ENCODE measurements at regions of chrX and their contacts with region 1.

Region 1: DNA sequence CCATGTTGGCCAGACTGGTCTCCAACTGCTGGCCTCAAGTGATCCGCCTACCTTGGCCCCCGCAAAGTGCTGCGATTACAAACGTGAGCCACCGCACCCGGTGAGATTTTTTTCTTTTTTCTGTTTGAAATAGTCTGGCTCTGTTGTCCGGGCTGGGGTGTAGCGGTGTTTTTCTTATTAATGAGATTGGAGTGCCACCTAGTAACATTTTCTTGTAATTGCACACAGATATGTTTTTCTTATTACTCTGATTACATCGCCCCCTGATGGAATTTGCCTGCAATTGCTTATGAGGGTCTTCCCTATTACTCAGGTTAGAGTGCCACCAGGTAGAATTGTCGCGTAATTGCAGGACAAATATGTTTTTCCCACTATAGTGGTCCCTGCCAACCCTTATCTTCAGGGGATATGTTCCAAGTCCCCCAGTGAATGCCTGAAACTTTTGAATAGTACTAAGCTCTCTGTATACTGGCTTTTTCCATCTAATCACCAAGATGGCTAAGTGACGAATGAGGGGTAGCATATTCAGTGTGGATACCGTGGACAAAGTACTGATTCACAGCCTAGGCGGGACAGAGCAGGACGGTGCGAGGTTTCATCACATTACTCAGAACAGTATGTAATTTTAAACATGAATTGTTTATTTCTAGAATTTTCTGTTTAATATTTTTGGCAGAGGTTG is 8.6 kb upstream of the PDHA1 start:
- DNase-seq: peak; percentile 33
- H3K4me3 Mint-ChIP-seq: no peak overlapping the region
- H3K27ac Mint-ChIP-seq: no peak overlapping the region
- H3K4me1 Mint-ChIP-seq: no peaks in the 10 kb centered on the region
- H3K27me3 Mint-ChIP-seq: no peaks in the 10 kb centered on the region
- CTCF ChIP-seq: peak; percentile 36

Region 2: DNA sequence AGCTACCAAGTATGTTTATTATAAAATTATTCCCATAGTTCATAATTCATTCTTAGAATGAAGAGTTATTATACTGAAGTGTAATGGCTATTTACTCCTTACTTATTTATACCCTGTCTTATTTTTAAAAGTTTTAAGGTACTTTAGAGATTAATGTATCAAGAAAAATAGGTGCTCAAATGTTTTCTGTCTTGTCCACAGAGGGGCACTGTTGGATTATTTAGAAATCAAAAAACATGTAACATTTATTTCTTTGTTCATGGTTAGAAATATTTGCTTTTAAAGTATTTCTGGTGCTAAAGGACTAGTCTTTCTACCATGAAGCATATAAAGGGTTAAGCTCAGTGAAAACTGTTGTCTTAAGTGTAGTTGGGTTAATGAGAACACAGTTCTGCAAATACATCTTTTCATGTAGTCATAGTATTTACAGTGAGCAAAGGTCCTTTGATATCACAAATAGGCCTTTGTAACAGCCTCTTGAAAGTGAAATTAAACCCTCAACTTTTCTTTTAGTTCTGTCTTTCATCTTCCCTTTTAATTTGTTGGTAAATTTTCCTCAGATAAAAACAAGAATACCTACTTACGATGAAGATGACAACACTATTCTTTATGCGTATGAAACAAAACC is 1590.1 kb before region 1 on chrX:
- CTCF ChIA-PET with region 1: no interaction called
- POLR2A ChIA-PET with region 1: no interaction called
- intact Hi-C with region 1: loop called (anchors 10 kb)
- DNase-seq: peak; percentile 14
- H3K4me3 Mint-ChIP-seq: no peak overlapping the region
- H3K27ac Mint-ChIP-seq: no peak overlapping the region
- H3K4me1 Mint-ChIP-seq: peaks cover 4% of the 10 kb centered on the region
- H3K27me3 Mint-ChIP-seq: peaks cover 40% of the 10 kb centered on the region
- CTCF ChIP-seq: peak; percentile 43

Region 3: DNA sequence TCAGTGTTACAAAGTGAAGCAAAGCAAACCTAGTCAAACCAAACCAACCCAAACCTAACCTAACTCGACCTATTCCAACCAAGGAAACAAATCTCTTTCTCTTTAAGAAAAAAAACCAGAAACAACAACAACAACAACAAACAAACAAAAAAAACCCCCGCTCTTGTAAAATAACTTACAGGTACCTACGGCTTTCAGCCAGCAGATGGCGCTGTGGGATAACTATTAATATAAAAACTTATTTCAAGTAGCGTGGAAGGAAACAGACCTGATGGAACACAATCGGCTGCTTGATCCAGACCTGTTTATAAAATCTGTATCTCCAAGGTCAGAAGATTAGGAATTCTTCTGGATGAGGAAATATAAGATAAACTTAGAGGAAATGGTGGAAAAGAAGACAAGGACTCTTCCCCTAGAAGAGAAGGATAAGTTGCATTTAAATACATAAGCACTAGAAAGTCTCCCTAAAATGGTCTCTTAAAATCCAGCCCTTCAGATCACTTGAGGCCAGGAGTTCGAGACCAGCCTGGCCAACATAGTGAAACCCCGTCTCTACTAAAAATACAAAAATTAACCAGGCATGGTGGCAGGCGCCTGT is 944.0 kb before region 1 on chrX:
- CTCF ChIA-PET with region 1: interaction called, 19 read pairs
- POLR2A ChIA-PET with region 1: no interaction called
- intact Hi-C with region 1: loop called (anchors 1 kb)
- DNase-seq: peak; percentile 52
- H3K4me3 Mint-ChIP-seq: no peak overlapping the region
- H3K27ac Mint-ChIP-seq: no peak overlapping the region
- H3K4me1 Mint-ChIP-seq: no peaks in the 10 kb centered on the region
- H3K27me3 Mint-ChIP-seq: no peaks in the 10 kb centered on the region
- CTCF ChIP-seq: peak; percentile 67

Region 4: GRCh38 chrX:18931972-18932371 is 403.1 kb before region 1 on chrX:
- CTCF ChIA-PET with region 1: interaction called, 4 read pairs
- POLR2A ChIA-PET with region 1: no interaction called
- intact Hi-C with region 1: loop called (anchors 1 kb)
- DNase-seq: peak; percentile 24
- H3K4me3 Mint-ChIP-seq: no peak overlapping the region
- H3K27ac Mint-ChIP-seq: no peak overlapping the region
- H3K4me1 Mint-ChIP-seq: no peaks in the 10 kb centered on the region
- H3K27me3 Mint-ChIP-seq: no peaks in the 10 kb centered on the region
- CTCF ChIP-seq: peak; percentile 28

Region 5: DNA sequence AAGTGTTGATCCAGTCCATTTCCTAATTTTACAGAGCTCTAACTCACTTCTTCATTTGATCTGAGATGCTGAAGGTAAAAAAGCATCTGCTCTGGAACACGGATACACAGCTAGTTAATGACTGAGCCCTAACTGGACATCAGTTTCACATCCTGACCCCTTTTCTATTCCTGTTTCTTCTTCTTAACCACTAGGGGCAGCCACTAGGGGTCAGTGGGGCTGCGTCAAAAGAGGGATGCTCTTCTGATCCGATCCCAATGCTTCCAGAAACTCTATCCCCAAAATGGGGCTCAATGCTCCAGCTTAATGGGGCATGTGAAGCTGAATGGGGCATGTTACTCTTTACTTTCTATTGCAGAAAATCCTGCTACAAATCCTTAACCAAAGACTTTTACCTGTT is 317.8 kb before region 1 on chrX:
- CTCF ChIA-PET with region 1: interaction called, 28 read pairs
- POLR2A ChIA-PET with region 1: interaction called, 3 read pairs
- intact Hi-C with region 1: loop called (anchors 1 kb)
- DNase-seq: peak; percentile 49
- H3K4me3 Mint-ChIP-seq: no peak overlapping the region
- H3K27ac Mint-ChIP-seq: no peak overlapping the region
- H3K4me1 Mint-ChIP-seq: no peaks in the 10 kb centered on the region
- H3K27me3 Mint-ChIP-seq: no peaks in the 10 kb centered on the region
- CTCF ChIP-seq: peak; percentile 4

Region 6: DNA sequence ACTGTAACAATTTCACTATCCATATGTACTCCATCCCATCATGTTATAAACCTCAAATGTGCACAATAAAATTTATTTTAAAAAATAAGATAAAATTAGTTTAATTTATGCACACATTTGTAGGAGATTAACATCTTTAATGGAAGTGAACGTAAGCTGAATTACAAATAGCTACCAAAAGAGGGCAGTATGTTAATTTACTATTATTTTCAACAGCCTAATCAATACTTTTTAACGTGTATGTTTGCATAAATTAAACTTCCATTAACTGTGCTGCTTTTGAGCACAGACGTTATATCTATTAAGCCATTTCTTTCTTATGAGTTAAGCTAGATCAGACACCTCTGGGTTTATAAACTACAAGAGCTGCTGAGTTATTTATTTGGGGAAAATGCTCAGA is 294.7 kb before region 1 on chrX:
- CTCF ChIA-PET with region 1: interaction called, 37 read pairs
- POLR2A ChIA-PET with region 1: no interaction called
- intact Hi-C with region 1: loop called (anchors 1 kb)
- DNase-seq: peak; percentile 9
- H3K4me3 Mint-ChIP-seq: no peak overlapping the region
- H3K27ac Mint-ChIP-seq: no peak overlapping the region
- H3K4me1 Mint-ChIP-seq: peaks cover under 1% of the 10 kb centered on the region
- H3K27me3 Mint-ChIP-seq: no peaks in the 10 kb centered on the region
- CTCF ChIP-seq: peak; percentile 23

Region 7: GRCh38 chrX:19094654-19095053 is 240.4 kb before region 1 on chrX:
- CTCF ChIA-PET with region 1: interaction called, 3 read pairs
- POLR2A ChIA-PET with region 1: no interaction called
- intact Hi-C with region 1: loop called (anchors 5 kb)
- DNase-seq: no peak
- H3K4me3 Mint-ChIP-seq: no peak overlapping the region
- H3K27ac Mint-ChIP-seq: no peak overlapping the region
- H3K4me1 Mint-ChIP-seq: no peaks in the 10 kb centered on the region
- H3K27me3 Mint-ChIP-seq: no peaks in the 10 kb centered on the region
- CTCF ChIP-seq: no peak

Region 8: DNA sequence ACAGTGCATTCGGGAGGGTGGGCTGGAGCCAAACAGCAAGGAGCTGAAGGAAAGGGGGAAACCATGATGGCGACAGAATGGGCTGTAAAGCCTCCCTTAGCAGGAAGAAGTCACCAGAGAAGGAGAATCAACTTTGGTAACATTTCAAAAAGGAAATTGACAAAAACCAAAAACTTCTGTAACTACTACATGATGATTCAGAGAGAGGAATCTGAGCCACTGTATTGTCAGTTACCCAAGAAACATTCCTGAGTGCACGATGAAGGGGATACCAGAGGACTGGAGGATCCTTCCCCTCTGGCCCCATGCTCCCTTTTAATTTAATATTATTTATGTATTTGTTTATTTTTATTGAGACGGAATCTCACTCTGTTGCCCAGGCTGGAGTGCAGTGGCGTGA is 35.0 kb after region 1 on chrX:
- CTCF ChIA-PET with region 1: no interaction called
- POLR2A ChIA-PET with region 1: no interaction called
- intact Hi-C with region 1: no loop called
- DNase-seq: no peak
- H3K4me3 Mint-ChIP-seq: no peak overlapping the region
- H3K27ac Mint-ChIP-seq: no peak overlapping the region
- H3K4me1 Mint-ChIP-seq: no peaks in the 10 kb centered on the region
- H3K27me3 Mint-ChIP-seq: no peaks in the 10 kb centered on the region
- CTCF ChIP-seq: no peak

Region 9: GRCh38 chrX:19747652-19748610 is 412.8 kb after region 1 on chrX:
- CTCF ChIA-PET with region 1: no interaction called
- POLR2A ChIA-PET with region 1: no interaction called
- intact Hi-C with region 1: no loop called
- DNase-seq: no peak
- H3K4me3 Mint-ChIP-seq: no peak overlapping the region
- H3K27ac Mint-ChIP-seq: no peak overlapping the region
- H3K4me1 Mint-ChIP-seq: no peaks in the 10 kb centered on the region
- H3K27me3 Mint-ChIP-seq: peaks cover 9% of the 10 kb centered on the region
- CTCF ChIP-seq: no peak

Measured in MCF 10A (cell line).